Right cardiac atrium (tissue), 5 donors: ENCODE measurements at regions of chr11 and their contacts with region 1.

Region 1: GRCh38 chr11:77091146-77091940 is 11.3 kb upstream of the OMP start:
- DNase-seq: peak; percentile 77 to 92 (median 91)
- ATAC-seq: peak; percentile 61 to 76
- H3K4me3 ChIP-seq: no peak overlapping the region
- H3K27ac ChIP-seq: no peak overlapping the region
- H3K4me1 ChIP-seq: no peaks in the 10 kb centered on the region
- H3K27me3 ChIP-seq: no peaks in the 10 kb centered on the region

Region 2: GRCh38 chr11:77047007-77047927 is 44.1 kb before region 1 on chr11:
- intact Hi-C with region 1: loop called (anchors 1 to 5 kb)
- DNase-seq: peak in 2 of 3 donors; percentile 70 to 75
- ATAC-seq: peak; percentile 92 to 93
- H3K4me3 ChIP-seq: peak overlapping the region; percentile 51
- H3K27ac ChIP-seq: no peak overlapping the region
- H3K4me1 ChIP-seq: no peaks in the 10 kb centered on the region
- H3K27me3 ChIP-seq: no peaks in the 10 kb centered on the region

Region 3: DNA sequence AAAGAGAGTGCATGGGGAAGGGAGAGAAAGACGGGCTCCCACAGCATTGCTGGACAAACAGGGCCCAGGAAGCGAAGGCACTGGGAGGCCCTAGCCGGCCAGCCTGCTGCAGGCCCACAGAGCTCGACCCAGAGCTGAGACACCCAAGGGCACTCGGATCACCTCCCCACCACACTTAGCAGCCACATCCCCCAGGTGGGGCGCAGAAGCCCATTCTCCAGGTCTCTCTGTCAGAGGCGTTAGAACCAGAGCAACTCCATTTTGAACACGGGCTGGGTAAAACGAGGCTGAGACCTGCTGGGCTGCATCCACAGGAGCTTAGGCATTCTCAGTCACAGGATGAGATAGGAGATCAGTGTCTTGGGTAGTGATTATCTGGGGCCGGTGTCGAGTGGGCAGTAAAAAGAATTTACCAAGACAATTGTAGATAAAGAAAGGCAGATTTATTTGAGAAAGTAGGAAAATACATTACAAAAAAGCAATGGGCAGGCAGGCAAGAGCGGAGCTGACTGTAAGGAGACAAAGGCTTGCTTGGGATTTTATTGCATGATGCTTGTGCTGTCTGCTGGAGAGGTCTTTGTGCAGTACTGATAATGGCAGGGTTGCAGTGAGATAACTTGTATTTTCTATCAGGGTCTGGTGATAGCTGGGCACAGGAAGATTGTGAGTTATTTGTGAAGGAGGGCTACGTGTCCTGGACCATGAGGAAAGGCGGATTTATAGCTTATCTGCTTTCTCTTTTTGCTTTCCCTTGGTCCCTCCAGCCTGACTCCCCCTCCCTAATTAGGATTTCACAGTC is 37.9 kb before region 1 on chr11:
- intact Hi-C with region 1: loop called in 2 of 4 experiments (anchors 5 kb)
- DNase-seq: no peak
- ATAC-seq: no peak
- H3K4me3 ChIP-seq: no peak overlapping the region
- H3K27ac ChIP-seq: no peak overlapping the region
- H3K4me1 ChIP-seq: no peaks in the 10 kb centered on the region
- H3K27me3 ChIP-seq: no peaks in the 10 kb centered on the region